CD4-positive, alpha-beta memory T cell (primary cell): ENCODE measurements at regions of chr2 and their contacts with region 1.

Region 1: DNA sequence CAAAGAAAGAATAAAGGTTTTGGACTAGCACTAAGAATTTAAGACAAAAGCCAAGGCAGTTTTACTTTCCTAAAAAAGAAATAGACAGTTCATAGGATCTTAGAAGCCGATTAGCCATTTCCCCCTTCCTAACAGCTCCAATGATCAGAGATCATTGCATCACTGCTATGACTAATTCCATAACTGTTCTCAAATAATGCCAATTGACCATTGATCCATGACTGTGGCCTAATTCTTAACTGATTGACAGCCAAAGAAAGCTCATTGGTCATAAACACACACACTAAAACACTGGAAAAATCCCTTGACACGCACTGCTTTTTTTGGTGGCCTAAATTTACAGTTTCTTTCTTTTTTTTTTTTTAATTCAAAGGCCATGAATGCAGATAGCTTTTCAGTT is 345.0 kb upstream of the ACVR2A start:
- DNase-seq: no peak
- H3K4me3 ChIP-seq: no peak overlapping the region
- H3K4me3 Mint-ChIP-seq: peak overlapping the region in 7 of 8 donors; percentile 36 to 87 (median 70)
- H3K27ac ChIP-seq: peak overlapping the region; percentile 5
- H3K27ac Mint-ChIP-seq: peak overlapping the region; percentile 2 to 78 (median 61)
- H3K4me1 ChIP-seq: peaks cover 52% of the 10 kb centered on the region
- H3K4me1 Mint-ChIP-seq: peaks cover 48 to 77% (median 63%) of the 10 kb centered on the region in 4 donors
- H3K27me3 ChIP-seq: no peaks in the 10 kb centered on the region
- H3K27me3 Mint-ChIP-seq: no peaks in the 10 kb centered on the region

Region 2: DNA sequence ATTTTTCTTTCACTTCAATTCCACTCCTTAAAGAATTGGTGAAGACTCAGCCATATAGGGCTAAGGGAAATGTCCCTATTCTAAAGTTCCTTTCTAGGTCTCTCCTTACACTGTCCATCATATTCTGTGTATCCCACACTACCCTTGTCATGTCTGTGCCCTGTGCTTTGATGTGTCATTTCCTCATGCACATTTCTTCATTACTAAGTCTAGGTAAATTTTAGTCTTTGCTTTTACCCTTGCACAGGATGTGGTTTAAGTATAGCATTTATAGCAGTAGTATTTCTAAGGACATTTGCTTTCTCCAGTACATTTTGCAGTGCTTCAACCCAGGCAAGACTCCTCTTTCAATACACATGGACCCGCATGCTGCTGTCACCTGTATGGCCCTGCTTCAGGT is 123.5 kb after region 1 on chr2:
- CTCF ChIA-PET with region 1: no interaction called
- POLR2A ChIA-PET with region 1: no interaction called
- intact Hi-C with region 1: loop called (anchors 10 kb)
- DNase-seq: peak in 4 of 5 donors; percentile 40 to 56 (median 47)
- H3K4me3 ChIP-seq: no peak overlapping the region
- H3K4me3 Mint-ChIP-seq: peak overlapping the region in 5 of 8 donors; percentile 1 to 60 (median 15)
- H3K27ac ChIP-seq: no peak overlapping the region
- H3K27ac Mint-ChIP-seq: peak overlapping the region in 5 of 7 donors; percentile 1 to 17 (median 2)
- H3K4me1 ChIP-seq: peaks cover 22% of the 10 kb centered on the region
- H3K4me1 Mint-ChIP-seq: peaks cover 6 to 25% (median 17%) of the 10 kb centered on the region in 4 donors
- H3K27me3 ChIP-seq: no peaks in the 10 kb centered on the region
- H3K27me3 Mint-ChIP-seq: no peaks in the 10 kb centered on the region

Region 3: GRCh38 chr2:147904044-147904443 is 404.3 kb after region 1 on chr2:
- CTCF ChIA-PET with region 1: no interaction called
- POLR2A ChIA-PET with region 1: no interaction called
- intact Hi-C with region 1: loop called (anchors 10 kb)
- DNase-seq: no peak
- H3K4me3 ChIP-seq: no peak overlapping the region
- H3K4me3 Mint-ChIP-seq: peak overlapping the region in 1 of 8 donors; percentile 9
- H3K27ac ChIP-seq: no peak overlapping the region
- H3K27ac Mint-ChIP-seq: peak overlapping the region in 2 of 7 donors; percentile 35 to 48
- H3K4me1 ChIP-seq: no peaks in the 10 kb centered on the region
- H3K4me1 Mint-ChIP-seq: peaks cover 0 to 13% (median 10%) of the 10 kb centered on the region in 4 donors
- H3K27me3 ChIP-seq: no peaks in the 10 kb centered on the region
- H3K27me3 Mint-ChIP-seq: no peaks in the 10 kb centered on the region